GM12878 (cell line): ENCODE measurements at regions of chr16 and their contacts with region 1.

Region 1: GRCh38 chr16:72604375-72604774 is 432.4 kb upstream of the PMFBP1 start:
- DNase-seq: no peak
- ATAC-seq: peak; percentile 35
- H3K4me3 ChIP-seq: no peak overlapping the region
- H3K27ac ChIP-seq: no peak overlapping the region
- H3K4me1 ChIP-seq: peaks cover 2% of the 10 kb centered on the region; the same call in 1 of the 2 replicates
- H3K27me3 ChIP-seq: no peaks in the 10 kb centered on the region
- CTCF ChIP-seq: no peak
- EP300 ChIP-seq: peak in 1 of 2 experiments; percentile 57; a peak in 1 of 4 replicates
- POLR2A ChIP-seq: no peak
- RAD21 ChIP-seq: no peak

Region 2: DNA sequence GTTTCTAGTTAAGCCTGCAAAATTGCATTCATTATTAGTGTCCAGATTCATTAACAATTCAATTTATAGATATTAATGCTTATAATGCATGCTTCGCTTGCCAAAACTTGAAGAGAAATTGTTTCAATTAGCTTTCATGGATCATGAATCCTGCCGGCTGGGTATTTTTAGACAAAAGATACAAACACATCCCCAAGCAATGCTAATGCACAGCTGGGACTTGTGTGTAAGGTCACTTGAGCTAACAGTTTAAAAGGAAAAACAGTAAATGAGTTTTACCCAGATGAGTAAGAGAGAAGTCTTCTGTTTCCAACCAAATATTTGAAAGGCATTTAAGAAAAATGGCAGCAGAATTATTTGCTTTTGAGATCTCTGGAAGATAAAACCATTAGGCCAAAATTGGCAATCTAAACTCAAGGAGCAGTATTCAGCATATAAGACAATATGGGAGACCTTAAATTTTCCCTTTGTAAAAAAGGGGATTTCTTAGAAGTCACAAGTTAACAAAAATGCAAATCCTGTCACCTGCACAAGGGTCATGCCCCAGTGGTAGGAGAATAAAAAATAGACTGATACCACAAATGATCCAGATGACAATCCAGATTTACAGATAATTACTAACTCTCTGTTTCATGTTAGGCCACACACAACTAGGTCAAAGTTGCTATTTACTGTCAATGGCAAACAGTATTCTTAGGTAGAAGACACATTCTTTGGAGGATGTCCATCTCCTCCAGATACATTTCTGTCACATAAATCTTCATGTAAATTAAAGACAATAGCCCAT is 14.0 kb before region 1 on chr16:
- CTCF ChIA-PET with region 1: interaction called, 3 read pairs
- POLR2A ChIA-PET with region 1: interaction called, 6 read pairs
- RAD21 ChIA-PET with region 1: interaction called, 6 read pairs
- SMC1A ChIA-PET with region 1: interaction called, 18 read pairs
- in situ Hi-C with region 1: no loop called
- intact Hi-C with region 1: no loop called
- DNase-seq: peak; percentile 66
- ATAC-seq: peak; percentile 92
- H3K4me3 ChIP-seq: no peak overlapping the region
- H3K27ac ChIP-seq: peak overlapping the region; percentile 74
- H3K4me1 ChIP-seq: peaks cover 26% of the 10 kb centered on the region
- H3K27me3 ChIP-seq: no peaks in the 10 kb centered on the region
- CTCF ChIP-seq: no peak
- EP300 ChIP-seq: peak; percentile 76 to 93; a peak in 3 of 4 replicates
- POLR2A ChIP-seq: no peak
- RAD21 ChIP-seq: no peak

Region 3: DNA sequence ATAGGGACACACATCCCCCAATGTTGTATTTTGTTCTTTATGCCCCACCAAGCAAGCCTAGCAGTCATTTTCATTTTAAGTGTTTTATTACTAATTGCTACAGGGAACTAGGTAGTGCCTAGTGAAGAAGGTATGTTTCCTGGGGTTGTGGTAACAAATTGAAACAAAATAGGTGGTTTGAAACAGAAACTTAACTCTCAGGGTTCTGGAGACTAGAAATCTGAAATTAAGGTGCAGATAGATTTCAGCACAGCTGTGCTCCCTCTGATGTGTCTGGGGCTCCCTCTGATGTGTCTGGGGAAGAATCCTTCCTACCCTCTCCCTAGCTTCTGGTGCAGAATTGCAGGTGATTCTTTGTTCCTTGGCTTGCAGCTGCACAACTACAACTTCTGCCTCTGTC is 53.4 kb after region 1 on chr16:
- CTCF ChIA-PET with region 1: interaction called, 3 read pairs
- POLR2A ChIA-PET with region 1: no interaction called
- RAD21 ChIA-PET with region 1: no interaction called
- SMC1A ChIA-PET with region 1: interaction called, 12 read pairs
- in situ Hi-C with region 1: no loop called
- intact Hi-C with region 1: no loop called
- DNase-seq: peak; percentile 82
- ATAC-seq: peak; percentile 91
- H3K4me3 ChIP-seq: peak overlapping the region; percentile 7; the same call in 1 of the 2 replicates
- H3K27ac ChIP-seq: peak overlapping the region; percentile 58; the same call in 1 of the 2 replicates
- H3K4me1 ChIP-seq: peaks cover 24% of the 10 kb centered on the region
- H3K27me3 ChIP-seq: no peaks in the 10 kb centered on the region
- CTCF ChIP-seq: peak in 2 of 3 experiments; percentile 19 to 40; a peak in 2 of 6 replicates
- EP300 ChIP-seq: no peak
- POLR2A ChIP-seq: no peak
- RAD21 ChIP-seq: peak; percentile 51

Region 4: DNA sequence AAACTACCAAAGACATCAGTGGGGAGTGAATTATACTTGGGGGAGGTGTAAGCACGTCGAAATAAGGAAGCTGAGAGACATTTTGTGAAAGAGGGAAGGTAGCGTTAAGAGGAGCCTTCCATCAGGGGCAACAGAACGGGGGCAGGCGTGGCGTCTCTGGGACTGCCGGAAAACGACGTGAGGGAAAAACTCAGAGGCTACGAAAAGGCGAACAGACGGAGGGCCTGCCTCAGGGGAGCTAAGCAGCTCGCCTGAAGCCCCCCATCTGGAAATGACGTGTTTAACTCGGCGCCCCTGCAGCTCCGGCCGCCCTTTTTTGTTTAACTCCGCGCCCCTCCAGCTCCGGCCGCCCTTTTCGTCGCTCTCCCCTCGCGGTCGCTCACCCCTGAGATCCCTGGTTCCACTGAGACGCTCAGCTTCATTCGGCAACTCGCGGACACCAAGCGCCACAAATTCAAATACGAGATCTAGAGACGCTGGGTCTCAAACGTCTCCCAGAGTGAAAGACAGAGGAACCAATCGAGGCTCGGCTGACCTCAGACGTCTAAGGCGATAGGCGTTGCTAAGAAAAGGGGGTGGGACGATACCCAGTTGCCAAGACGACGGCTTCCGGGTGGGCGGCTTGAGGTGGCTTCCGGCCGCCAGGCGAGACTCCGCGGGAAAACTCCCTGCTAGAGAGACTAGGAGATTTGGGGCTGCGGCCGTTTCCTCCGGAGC is 60.3 kb after region 1 on chr16:
- CTCF ChIA-PET with region 1: interaction called, 3 read pairs
- POLR2A ChIA-PET with region 1: interaction called, 11 read pairs
- RAD21 ChIA-PET with region 1: no interaction called
- SMC1A ChIA-PET with region 1: interaction called, 5 read pairs
- in situ Hi-C with region 1: no loop called
- intact Hi-C with region 1: no loop called
- DNase-seq: peak; percentile 94
- ATAC-seq: peak; percentile 98
- H3K4me3 ChIP-seq: peak overlapping the region; percentile 74
- H3K27ac ChIP-seq: peak overlapping the region; percentile 90
- H3K4me1 ChIP-seq: peaks cover under 1% of the 10 kb centered on the region
- H3K27me3 ChIP-seq: no peaks in the 10 kb centered on the region
- CTCF ChIP-seq: no peak
- EP300 ChIP-seq: no peak
- POLR2A ChIP-seq: peak; percentile 84
- RAD21 ChIP-seq: no peak